ENCODE measurements at regions of chr12 and their contacts with region 1.

Region 1: GRCh38 chr12:30296486-30296885 is 399.2 kb downstream of the IPO8 start:
- DNase-seq: no peak

Region 2: DNA sequence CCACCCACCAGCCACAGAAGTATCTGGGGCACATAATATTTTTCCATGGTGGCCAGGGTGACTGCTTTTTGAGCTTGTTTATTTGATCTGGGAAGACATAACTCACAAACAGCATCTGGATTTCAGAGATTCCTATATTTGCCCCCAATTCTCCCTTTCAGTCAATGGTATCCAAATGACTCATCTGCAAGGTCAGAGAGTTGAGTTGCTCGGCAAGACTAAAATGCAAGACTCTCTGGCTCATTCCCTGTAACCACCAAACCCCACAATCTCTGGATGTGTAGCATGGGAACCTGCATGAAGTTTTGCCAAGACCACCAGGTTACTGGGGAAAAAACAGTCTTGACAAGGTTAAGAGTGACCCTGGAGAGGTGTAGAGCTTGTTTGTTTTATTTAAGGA is 1322.3 kb before region 1 on chr12:
- intact Hi-C with region 1: no loop called
- DNase-seq: no peak

Region 3: GRCh38 chr12:30440826-30441602 is 144.5 kb after region 1 on chr12:
- intact Hi-C with region 1: loop called in 1 of 2 experiments (anchors 10 kb)
- DNase-seq: no peak